Heart right ventricle (tissue), 16 donors: ENCODE measurements at regions of chr6 and their contacts with region 1.

Region 1: DNA sequence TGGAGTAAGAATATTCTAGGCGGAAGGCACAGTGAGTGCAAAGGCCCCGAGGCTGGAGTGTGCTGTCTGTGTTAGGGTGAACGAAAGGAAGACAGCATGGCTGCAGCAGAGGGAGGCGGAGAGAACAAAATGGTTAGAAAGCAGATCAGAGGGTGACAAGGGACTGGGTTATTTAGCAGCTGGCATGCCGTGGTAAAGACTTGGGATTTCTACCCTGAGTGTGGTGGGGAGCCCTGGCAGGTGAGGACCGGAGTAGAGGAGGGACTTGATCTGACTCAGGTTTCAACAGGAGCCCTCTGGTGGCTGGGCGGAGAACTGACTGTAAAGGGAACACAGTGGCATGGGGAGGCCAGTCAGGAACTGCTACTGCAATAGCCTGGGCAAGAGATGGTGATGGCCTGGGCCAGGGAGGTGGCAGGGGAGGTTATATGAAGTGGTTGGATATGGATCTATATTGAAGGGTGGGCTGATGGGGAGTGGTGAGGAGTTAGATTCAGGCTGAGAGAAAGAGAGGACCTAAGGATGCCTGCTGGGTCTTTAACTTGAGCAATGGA is 38.0 kb downstream of the PIM1 start:
- DNase-seq: peak; percentile 73 to 78
- ATAC-seq: peak in 7 of 8 donors; percentile 49 to 79 (median 62)
- H3K4me3 ChIP-seq: no peak overlapping the region
- H3K27ac ChIP-seq: peak overlapping the region in 1 of 10 donors; percentile 72
- H3K4me1 ChIP-seq: peaks cover 0 to 50% (median 0%) of the 10 kb centered on the region in 9 donors
- H3K27me3 ChIP-seq: peaks cover 0 to 3% (median 0%) of the 10 kb centered on the region in 7 donors
- CTCF ChIP-seq: peak in 8 of 9 donors; percentile 48 to 88 (median 65)

Region 2: DNA sequence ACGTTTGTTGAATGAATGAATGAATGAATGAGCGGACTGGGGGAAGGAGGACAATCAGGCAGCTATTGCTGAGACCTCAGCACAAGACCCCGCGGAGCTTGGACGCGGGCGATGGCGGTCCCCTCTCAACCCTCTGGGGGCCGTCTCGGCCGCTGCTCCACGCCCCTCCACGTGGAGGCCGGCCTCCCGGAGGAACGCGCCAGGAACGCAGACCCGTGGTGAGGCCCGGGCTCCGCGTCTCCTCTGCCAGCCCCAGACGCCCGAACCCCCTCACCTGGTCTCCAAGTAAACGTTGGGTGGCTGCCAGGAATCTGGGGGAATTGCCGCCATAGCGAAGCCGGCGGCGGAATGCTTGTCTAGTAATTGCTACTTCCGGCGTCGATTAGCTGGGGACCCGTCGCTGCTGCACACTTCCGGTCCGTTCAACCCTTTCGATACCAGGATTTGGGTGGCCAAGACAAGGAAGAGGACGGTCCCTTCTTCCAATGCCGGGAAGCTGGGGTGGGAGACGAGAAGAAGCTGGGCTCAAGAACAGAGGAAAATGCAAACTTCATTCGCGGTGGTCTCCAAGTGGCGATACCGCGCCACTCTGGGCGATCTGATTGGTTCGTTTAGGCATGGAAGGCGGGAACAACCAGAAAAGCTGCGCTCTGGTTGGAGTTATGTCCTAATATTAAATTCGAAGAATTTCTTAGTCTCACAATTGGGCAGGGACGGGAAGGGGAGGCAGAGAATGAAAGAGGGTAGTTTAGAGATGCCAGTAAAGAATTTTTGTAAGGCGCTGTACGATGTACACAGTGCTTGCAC is 333.3 kb before region 1 on chr6 and contains the start of gene PPIL1:
- intact Hi-C with region 1: loop called in 1 of 10 experiments (anchors 10 kb)
- DNase-seq: peak; percentile 77 to 89
- ATAC-seq: peak; percentile 88 to 95 (median 92)
- H3K4me3 ChIP-seq: peak within 1 kb of the TSS; percentile 45 to 94 (median 83)
- H3K27ac ChIP-seq: peak within 1 kb of the TSS; percentile 37 to 98 (median 92)
- H3K4me1 ChIP-seq: peaks cover 2 to 37% (median 17%) of the 10 kb centered on the region in 9 donors
- H3K27me3 ChIP-seq: no peaks in the 10 kb centered on the region
- CTCF ChIP-seq: no peak
- total RNA-seq, gene PPIL1: 34.5 to 106 (median 49.2) TPM

Region 3: DNA sequence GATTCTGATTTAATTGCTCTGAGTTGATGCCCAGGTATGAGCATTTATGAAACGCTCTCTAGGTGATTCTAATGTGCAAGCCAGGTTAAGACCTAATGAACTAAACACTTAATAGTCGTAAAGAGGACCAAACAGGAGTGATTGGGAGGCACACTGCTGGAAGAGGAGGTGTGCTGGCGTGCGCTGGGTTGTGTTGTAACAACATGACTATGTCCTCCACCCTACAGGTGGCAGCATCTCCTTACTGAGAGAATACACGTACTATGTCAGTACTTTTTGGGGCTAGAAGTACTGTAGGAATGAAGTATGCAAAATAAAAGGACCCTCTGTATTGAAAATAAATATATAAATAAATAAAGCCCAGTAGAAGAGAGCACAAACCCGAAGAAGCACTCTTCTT is 310.4 kb before region 1 on chr6:
- intact Hi-C with region 1: loop called in 1 of 10 experiments (anchors 10 kb)
- DNase-seq: no peak
- ATAC-seq: peak in 2 of 8 donors; percentile 63 to 68
- H3K4me3 ChIP-seq: no peak overlapping the region
- H3K27ac ChIP-seq: no peak overlapping the region
- H3K4me1 ChIP-seq: peaks cover 0 to 6% (median 0%) of the 10 kb centered on the region in 9 donors
- H3K27me3 ChIP-seq: no peaks in the 10 kb centered on the region
- CTCF ChIP-seq: peak in 8 of 9 donors; percentile 4 to 49 (median 28)

Region 4: DNA sequence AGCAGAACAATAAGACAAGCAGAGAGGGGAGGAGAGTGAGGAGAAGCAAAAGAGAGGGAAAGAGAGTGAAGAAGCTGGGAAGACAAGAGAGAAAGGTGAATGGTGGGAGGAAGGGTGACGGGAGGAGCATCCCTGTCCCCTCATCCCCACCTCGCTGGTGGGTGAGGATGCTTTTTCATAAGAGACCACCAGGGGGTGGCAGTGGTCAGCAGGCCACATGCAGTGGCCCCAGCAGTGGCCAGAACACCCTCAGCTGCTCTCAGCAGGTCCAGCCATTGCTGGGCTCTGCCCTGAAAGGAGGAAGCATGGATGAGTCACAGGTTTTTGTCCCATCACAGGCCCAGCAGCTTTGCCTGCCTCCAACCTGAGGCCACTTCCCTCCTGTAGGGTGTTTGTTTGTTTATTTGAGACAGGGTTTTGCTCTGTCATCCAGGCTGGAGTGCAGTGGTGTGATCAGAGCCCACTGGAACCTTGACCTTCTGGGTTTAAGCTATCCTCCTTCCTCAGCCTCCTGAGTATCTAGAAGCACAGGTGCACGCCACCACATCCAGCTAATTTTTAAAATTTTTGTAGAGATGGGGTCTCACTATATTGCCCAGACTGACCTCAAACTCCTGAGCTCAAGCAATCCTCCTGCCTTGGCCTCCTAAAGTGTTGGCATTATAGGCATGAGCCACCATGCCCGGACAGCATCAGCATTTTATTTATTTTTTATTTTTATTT is 178.6 kb before region 1 on chr6:
- intact Hi-C with region 1: loop called in 6 of 10 experiments (anchors 2 to 10 kb)
- DNase-seq: peak; percentile 62 to 64
- ATAC-seq: peak; percentile 85 to 96 (median 92)
- H3K4me3 ChIP-seq: no peak overlapping the region
- H3K27ac ChIP-seq: peak overlapping the region in 2 of 10 donors; percentile 26 to 85
- H3K4me1 ChIP-seq: peaks cover 0 to 22% (median 0%) of the 10 kb centered on the region in 9 donors
- H3K27me3 ChIP-seq: no peaks in the 10 kb centered on the region
- CTCF ChIP-seq: peak; percentile 70 to 93 (median 83)

Region 5: DNA sequence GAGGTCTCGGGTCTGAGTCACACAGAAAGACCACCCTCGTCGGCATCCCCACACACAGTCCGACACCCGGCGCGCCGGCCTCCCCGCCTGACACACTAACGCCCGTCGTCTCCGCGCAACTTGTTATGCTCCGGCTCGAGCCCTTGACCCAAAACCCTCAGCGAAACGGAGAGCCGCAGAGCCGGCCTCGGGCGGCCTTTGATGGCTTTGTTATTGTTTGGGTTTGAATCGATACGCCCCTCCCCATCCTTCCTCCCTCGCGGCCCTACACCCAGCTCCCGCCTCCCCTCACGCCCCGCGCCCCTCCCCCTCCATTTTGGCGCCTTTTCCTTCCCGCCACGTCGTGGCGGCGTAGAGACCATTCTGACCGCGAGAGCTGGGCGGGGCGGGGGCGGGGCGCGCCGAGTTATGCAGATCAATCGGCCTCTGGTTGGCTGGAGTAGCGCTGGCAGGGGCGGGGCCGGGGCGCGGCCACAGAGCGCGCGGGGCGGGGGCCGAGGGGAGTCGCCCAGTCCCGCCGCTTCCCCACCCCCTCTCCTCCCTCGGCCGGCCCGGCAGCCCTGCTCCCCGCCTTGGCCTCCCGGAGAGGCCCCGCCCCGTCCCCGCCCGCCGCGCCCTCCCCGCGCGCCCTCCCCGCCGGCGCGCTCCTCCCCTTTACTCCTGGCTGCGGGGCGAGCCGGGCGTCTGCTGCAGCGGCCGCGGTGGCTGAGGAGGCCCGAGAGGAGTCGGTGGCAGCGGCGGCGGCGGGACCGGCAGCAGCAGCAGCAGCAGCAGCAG is 38.3 kb before region 1 on chr6 and contains the start of gene PIM1:
- intact Hi-C with region 1: loop called in 3 of 10 experiments (anchors 2 to 5 kb)
- DNase-seq: peak; percentile 99 to 100
- ATAC-seq: peak; percentile 92 to 97 (median 94)
- H3K4me3 ChIP-seq: peak within 1 kb of the TSS; percentile 74 to 96 (median 92)
- H3K27ac ChIP-seq: peak within 1 kb of the TSS; percentile 75 to 97 (median 92)
- H3K4me1 ChIP-seq: peaks cover 0 to 45% (median 30%) of the 10 kb centered on the region in 9 donors
- H3K27me3 ChIP-seq: no peaks in the 10 kb centered on the region
- CTCF ChIP-seq: no peak
- total RNA-seq, gene PIM1: 9.2 to 106 (median 18.0) TPM